Activated naive CD4-positive, alpha-beta T cell treated with anti-CD3 and anti-CD28 coated beads for 36 hours (primary cell): ENCODE measurements at regions of chr7 and their contacts with region 1.

Region 1: GRCh38 chr7:129635300-129636029 is 23.9 kb downstream of the NRF1 start:
- DNase-seq: peak; percentile 89
- H3K4me3 Mint-ChIP-seq: no peak overlapping the region
- H3K27ac Mint-ChIP-seq: no peak overlapping the region
- H3K4me1 Mint-ChIP-seq: peaks cover 45% of the 10 kb centered on the region
- H3K27me3 Mint-ChIP-seq: no peaks in the 10 kb centered on the region

Region 2: DNA sequence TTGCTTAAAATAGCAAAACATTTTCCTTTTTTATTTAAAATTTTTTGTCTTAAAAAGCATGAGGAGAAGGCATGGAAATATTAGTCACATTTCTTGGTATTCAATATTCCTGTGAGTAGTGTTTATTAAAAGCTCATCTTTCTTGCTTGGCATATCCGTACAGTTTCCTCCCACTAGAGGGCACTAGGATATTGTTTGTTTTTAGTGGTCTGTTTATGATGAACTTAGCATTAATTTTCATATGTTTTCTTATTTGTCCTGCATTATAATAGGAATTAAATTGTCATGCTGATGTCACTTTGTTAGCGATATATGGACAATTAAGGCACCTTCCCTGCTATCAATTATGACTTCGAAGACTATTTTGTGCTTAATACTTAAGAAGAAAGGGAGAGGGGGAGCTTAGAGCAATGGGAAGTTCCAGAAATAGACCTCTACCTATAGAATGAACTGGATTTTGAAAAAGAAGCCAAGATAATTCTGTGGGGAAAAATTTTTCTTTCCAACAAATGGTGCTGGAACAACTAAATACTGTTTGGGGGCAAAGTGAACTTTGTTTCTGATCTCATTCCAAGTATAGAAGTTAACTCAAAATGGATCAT is 292.3 kb before region 1 on chr7:
- CTCF ChIA-PET with region 1: interaction called, 3 read pairs
- intact Hi-C with region 1: loop called (anchors 1 kb)
- DNase-seq: peak; percentile 39
- H3K4me3 Mint-ChIP-seq: no peak overlapping the region
- H3K27ac Mint-ChIP-seq: no peak overlapping the region
- H3K4me1 Mint-ChIP-seq: peaks cover 32% of the 10 kb centered on the region
- H3K27me3 Mint-ChIP-seq: no peaks in the 10 kb centered on the region

Region 3: DNA sequence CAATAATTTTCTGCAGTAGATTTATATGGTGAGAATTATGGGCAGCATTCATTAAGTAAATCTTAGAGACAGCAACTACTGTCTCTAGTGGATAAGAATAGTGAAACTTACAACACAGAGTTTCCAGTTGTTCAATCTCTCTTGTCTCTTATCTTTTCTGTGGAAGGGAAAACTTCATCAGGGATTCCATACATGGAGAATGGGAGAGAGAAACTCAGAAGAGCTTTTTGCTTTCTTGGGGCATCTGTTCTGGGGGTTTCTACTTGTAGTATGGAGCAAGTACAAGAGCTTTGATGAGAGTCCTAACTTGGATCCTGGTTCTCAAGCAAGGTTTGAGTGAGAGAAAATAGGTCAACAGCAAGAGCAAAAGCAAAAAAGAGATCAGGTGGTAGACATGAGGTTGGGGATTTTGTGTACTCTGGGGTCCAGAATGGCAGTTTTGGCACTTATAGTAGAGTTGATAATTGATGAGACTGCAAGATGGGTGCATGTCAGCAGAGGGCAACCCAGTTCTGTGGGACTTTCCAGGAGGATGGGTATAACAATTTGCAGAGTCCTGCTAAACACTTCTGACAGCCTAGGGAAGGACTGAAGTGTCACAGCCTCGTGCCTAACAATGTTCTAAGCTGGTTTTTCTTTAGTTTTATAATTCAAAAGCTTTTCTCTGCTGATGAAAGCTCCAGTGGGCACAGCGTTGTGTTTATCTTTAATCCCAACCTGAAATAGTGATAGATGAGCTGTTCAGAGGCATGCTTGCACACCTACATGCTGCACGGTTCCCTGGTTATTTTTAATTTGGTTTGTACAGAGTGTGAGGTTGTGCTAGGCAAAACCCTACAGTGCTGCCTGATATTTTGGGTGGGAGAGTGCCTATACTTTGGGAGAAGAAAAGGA is 233.3 kb before region 1 on chr7:
- CTCF ChIA-PET with region 1: no interaction called
- intact Hi-C with region 1: loop called (anchors 1 kb)
- DNase-seq: peak; percentile 74
- H3K4me3 Mint-ChIP-seq: no peak overlapping the region
- H3K27ac Mint-ChIP-seq: no peak overlapping the region
- H3K4me1 Mint-ChIP-seq: peaks cover 36% of the 10 kb centered on the region
- H3K27me3 Mint-ChIP-seq: no peaks in the 10 kb centered on the region

Region 4: DNA sequence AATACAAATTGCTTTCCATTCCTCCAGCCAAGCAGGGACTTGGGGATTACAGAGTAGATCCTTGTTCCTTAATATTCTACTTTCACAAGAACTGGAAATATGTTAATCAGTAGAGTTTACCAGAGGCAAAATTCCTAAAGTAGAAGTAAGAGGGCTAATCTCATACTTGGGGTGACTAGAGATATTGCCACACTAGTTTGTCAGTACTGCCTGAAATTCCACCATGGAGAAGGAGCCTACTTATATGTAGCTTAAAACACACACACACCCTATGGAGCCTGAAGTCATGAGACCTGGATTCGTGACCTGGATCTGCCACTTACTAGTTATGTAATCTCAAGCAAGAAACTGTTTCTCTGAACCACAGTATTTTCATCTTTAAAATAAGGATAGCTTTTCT is 167.4 kb before region 1 on chr7:
- CTCF ChIA-PET with region 1: interaction called, 4 read pairs
- intact Hi-C with region 1: loop called (anchors 1 kb)
- DNase-seq: no peak
- H3K4me3 Mint-ChIP-seq: no peak overlapping the region
- H3K27ac Mint-ChIP-seq: no peak overlapping the region
- H3K4me1 Mint-ChIP-seq: peaks cover 12% of the 10 kb centered on the region
- H3K27me3 Mint-ChIP-seq: no peaks in the 10 kb centered on the region

Region 5: GRCh38 chr7:129502376-129502776 is 133.1 kb before region 1 on chr7 and contains the start of gene SMKR1:
- CTCF ChIA-PET with region 1: no interaction called
- intact Hi-C with region 1: loop called (anchors 2 kb)
- DNase-seq: peak; percentile 86
- H3K4me3 Mint-ChIP-seq: peak within 1 kb of the TSS; percentile 75
- H3K27ac Mint-ChIP-seq: no peak within 1 kb of the TSS
- H3K4me1 Mint-ChIP-seq: peaks cover 9% of the 10 kb centered on the region
- H3K27me3 Mint-ChIP-seq: no peaks in the 10 kb centered on the region
- total RNA-seq, gene SMKR1: 0.99 to 1.2 TPM

Region 6: DNA sequence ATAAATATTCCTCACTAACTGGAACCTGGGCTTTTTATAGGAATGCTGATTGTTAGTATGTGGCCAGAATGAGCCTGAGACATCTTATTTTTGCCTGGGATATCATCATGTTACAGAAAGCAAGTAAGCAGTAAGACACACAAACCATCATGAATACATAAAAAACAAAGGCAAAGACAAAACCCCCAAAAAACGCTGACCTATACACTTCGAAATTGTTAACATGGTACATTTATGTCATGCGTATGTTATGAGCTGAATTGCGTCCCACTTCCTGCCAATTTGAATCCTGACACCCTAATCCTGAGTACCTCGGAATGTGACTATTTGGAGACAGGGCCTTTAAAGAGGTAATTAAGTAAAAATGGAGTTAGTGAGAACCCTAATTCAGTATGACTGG is 36.3 kb before region 1 on chr7:
- CTCF ChIA-PET with region 1: no interaction called
- intact Hi-C with region 1: no loop called
- DNase-seq: no peak
- H3K4me3 Mint-ChIP-seq: no peak overlapping the region
- H3K27ac Mint-ChIP-seq: no peak overlapping the region
- H3K4me1 Mint-ChIP-seq: peaks cover 3% of the 10 kb centered on the region
- H3K27me3 Mint-ChIP-seq: no peaks in the 10 kb centered on the region